Activated CD8-positive, alpha-beta T cell treated with anti-CD3 and anti-CD28 coated beads, Interleukin-2, amount 10 ng/mL, durations not matched to agents 7 days and 5 days (primary cell): ENCODE measurements at regions of chr10 and their contacts with region 1.

Region 1: GRCh38 chr10:14822879-14823755 is 14.7 kb downstream of the CDNF start:
- DNase-seq: peak; percentile 61
- ATAC-seq: no peak
- H3K4me3 Mint-ChIP-seq: no peak overlapping the region
- H3K27ac Mint-ChIP-seq: no peak overlapping the region
- H3K4me1 Mint-ChIP-seq: peaks cover 8% of the 10 kb centered on the region
- H3K27me3 Mint-ChIP-seq: peaks cover 13% of the 10 kb centered on the region

Region 2: DNA sequence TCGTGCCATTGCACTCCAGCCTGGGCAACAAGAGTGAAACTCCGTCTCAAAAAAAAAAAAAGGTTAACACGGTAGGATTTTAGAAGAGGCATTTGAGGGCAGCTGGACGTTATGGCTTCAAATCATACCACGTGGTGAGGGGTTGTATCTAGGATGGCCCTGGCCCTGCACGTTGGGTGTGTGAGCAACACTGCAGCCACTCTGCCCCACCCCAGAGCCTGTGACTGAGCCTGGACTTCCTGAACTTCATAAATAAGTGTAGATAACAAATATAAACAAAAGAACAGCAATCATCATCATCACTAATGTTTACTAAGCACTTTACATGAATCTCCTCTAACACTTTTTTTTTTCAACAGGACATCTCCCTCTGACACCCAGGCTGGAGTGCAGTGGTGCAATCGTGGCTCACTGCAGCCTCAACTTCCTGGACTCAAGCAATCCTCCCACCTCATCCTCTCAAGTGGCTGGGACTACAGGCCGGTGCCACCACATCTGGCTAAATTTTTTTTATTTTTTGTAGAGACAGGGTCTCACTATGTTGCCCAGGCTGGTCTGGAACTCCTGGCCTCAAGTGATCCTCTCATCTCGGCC is 322.8 kb before region 1 on chr10:
- CTCF ChIA-PET with region 1: interaction called, 10 read pairs
- POLR2A ChIA-PET with region 1: no interaction called
- DNase-seq: no peak
- ATAC-seq: no peak
- H3K4me3 Mint-ChIP-seq: no peak overlapping the region
- H3K27ac Mint-ChIP-seq: no peak overlapping the region
- H3K4me1 Mint-ChIP-seq: peaks cover 17% of the 10 kb centered on the region
- H3K27me3 Mint-ChIP-seq: peaks cover 13% of the 10 kb centered on the region

Region 3: GRCh38 chr10:14536241-14537213 is 286.6 kb before region 1 on chr10:
- CTCF ChIA-PET with region 1: interaction called, 22 read pairs
- POLR2A ChIA-PET with region 1: no interaction called
- DNase-seq: peak; percentile 56
- ATAC-seq: peak; percentile 62
- H3K4me3 Mint-ChIP-seq: no peak overlapping the region
- H3K27ac Mint-ChIP-seq: no peak overlapping the region
- H3K4me1 Mint-ChIP-seq: peaks cover 67% of the 10 kb centered on the region
- H3K27me3 Mint-ChIP-seq: no peaks in the 10 kb centered on the region

Region 4: DNA sequence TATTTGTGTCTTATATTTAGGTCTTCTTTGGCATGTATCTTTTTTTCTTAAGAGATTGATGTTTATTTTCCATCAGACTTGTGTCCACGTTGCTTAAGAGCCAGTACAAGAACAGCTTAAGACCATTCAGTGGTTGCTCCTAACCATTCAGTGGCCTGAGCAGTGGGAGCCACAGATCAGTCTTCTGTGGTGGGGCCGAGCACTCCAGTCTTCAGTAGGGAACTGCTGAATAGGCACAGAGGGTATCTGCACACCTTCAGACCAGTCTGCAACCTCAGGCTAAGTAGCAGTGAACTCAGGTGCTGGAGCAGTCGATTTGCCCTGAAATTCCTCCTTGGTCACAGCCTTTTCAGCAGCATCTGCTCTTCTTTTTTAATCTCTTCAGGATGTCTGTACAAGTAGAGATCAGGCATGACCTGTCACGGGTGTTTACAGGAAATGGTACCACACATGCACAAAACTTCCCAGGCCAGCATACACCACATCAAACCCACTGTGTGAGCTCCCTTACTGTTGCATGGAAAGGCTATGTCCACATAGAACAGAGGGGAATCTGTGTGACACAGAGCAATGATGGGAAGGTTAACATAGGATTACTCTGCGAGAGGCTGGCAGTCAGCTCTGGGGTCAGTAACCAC is 99.9 kb before region 1 on chr10:
- CTCF ChIA-PET with region 1: no interaction called
- POLR2A ChIA-PET with region 1: no interaction called
- DNase-seq: peak; percentile 44
- ATAC-seq: peak; percentile 78
- H3K4me3 Mint-ChIP-seq: no peak overlapping the region
- H3K27ac Mint-ChIP-seq: peak overlapping the region; percentile 25
- H3K4me1 Mint-ChIP-seq: peaks cover 18% of the 10 kb centered on the region
- H3K27me3 Mint-ChIP-seq: no peaks in the 10 kb centered on the region